CD14-positive monocyte (primary cell): ENCODE measurements at regions of chr2 and their contacts with region 1.

Region 1: DNA sequence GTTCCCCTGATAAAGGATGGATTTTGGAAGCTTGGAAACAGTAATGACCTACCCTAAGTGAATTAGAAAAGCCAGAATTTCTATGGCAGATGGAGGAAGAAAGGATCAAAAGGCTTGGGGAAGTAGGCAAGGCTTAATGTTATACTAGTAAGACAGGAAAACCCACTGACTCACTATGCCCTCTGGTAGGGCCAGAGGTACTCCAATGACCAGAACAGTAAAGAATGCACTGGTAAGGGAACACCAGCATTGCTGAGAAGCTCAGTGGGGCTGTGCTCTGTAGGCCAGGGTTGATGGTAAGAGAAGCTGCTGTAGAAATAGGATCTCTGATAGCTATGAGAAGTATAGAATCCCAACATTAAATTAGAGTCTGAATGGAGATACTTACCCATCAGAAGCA is 126.4 kb downstream of the GFPT1 start:
- DNase-seq: no peak
- H3K4me3 ChIP-seq: no peak overlapping the region
- H3K4me3 Mint-ChIP-seq: no peak overlapping the region
- H3K27ac ChIP-seq: no peak overlapping the region
- H3K27ac Mint-ChIP-seq: no peak overlapping the region
- H3K4me1 ChIP-seq: no peaks in the 10 kb centered on the region
- H3K4me1 Mint-ChIP-seq: no peaks in the 10 kb centered on the region
- H3K27me3 ChIP-seq: no peaks in the 10 kb centered on the region
- H3K27me3 Mint-ChIP-seq: peaks cover 0 to 7% (median 2%) of the 10 kb centered on the region in 3 donors
- CTCF ChIP-seq: no peak

Region 2: GRCh38 chr2:69297216-69297615 is 36.5 kb after region 1 on chr2:
- intact Hi-C with region 1: loop called in 1 of 2 experiments (anchors 2 kb)
- DNase-seq: no peak
- H3K4me3 ChIP-seq: no peak overlapping the region
- H3K4me3 Mint-ChIP-seq: no peak overlapping the region
- H3K27ac ChIP-seq: no peak overlapping the region
- H3K27ac Mint-ChIP-seq: no peak overlapping the region
- H3K4me1 ChIP-seq: peaks cover 12 to 13% of the 10 kb centered on the region in 2 donors
- H3K4me1 Mint-ChIP-seq: peaks cover 27% of the 10 kb centered on the region
- H3K27me3 ChIP-seq: no peaks in the 10 kb centered on the region
- H3K27me3 Mint-ChIP-seq: peaks cover 1 to 3% (median 2%) of the 10 kb centered on the region in 3 donors
- CTCF ChIP-seq: no peak